ENCODE measurements at regions of chr4 and their contacts with region 1.

Region 1: GRCh38 chr4:83484500-83485461 is at the start of gene ABRAXAS1:
- DNase-seq: peak; percentile 97
- H3K4me3 ChIP-seq: peak within 1 kb of the TSS; percentile 53 to 87 (median 78)
- H3K27ac ChIP-seq: peak within 1 kb of the TSS; percentile 90 to 97 (median 94)
- H3K4me1 ChIP-seq: peaks cover 0 to 15% (median 14%) of the 10 kb centered on the region in 4 donors
- H3K27me3 ChIP-seq: no peaks in the 10 kb centered on the region
- CTCF ChIP-seq: no peak
- EP300 ChIP-seq: no peak
- POLR2A ChIP-seq: peak; percentile 35 to 55
- total RNA-seq, gene ABRAXAS1: 12.5 to 29.6 (median 21.7) TPM

Region 2: GRCh38 chr4:83455281-83456129 is 29.3 kb before region 1 on chr4 and contains the starts of genes HELQ and MRPS18C:
- intact Hi-C with region 1: loop called (anchors 1 kb)
- DNase-seq: peak; percentile 99
- H3K4me3 ChIP-seq: peak within 1 kb of the TSS; percentile 80 to 86 (median 84)
- H3K27ac ChIP-seq: peak within 1 kb of the TSS; percentile 96 to 99 (median 98)
- H3K4me1 ChIP-seq: peaks cover 0 to 32% (median 22%) of the 10 kb centered on the region in 4 donors
- H3K27me3 ChIP-seq: no peaks in the 10 kb centered on the region
- CTCF ChIP-seq: peak in 2 of 4 experiments; percentile 13 to 48
- EP300 ChIP-seq: peak in 1 of 4 donors; percentile 20
- POLR2A ChIP-seq: peak; percentile 45 to 66
- total RNA-seq, gene HELQ: 11.8 to 21.8 (median 18.9) TPM
- total RNA-seq, gene MRPS18C: 8.3 to 36.2 (median 17.4) TPM

Region 3: GRCh38 chr4:83535520-83536361 is 51.0 kb after region 1 on chr4 and contains the start of gene GPAT3:
- intact Hi-C with region 1: loop called (anchors 2 kb)
- DNase-seq: peak; percentile 91
- H3K4me3 ChIP-seq: peak within 1 kb of the TSS; percentile 64 to 80 (median 66)
- H3K27ac ChIP-seq: peak within 1 kb of the TSS; percentile 78 to 81 (median 79)
- H3K4me1 ChIP-seq: peaks cover 0 to 30% (median 17%) of the 10 kb centered on the region in 4 donors
- H3K27me3 ChIP-seq: no peaks in the 10 kb centered on the region
- CTCF ChIP-seq: no peak
- EP300 ChIP-seq: no peak
- POLR2A ChIP-seq: peak in 1 of 2 donors; percentile 43
- total RNA-seq, gene GPAT3: 5.6 to 23.1 (median 17.3) TPM